ENCODE measurements at regions of chr11 and their contacts with region 1.

Region 1: DNA sequence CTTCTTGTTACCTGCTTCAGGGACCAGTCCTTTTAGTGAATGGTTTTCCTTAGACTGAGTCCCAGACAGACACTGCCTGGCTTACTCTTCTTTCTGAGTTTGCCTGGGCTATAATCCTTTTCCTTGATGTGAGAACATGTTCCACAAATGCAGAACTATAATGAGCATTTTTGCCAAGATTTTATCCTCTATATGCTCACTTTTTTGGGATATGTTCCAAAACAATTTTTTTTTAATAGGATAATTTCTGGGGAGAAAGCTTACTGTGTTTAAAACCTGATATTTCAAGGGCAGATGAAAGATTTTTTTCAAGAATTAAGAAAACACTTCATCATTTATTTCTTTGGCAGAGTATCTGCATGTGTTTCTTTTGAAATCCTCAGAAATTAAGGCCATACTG is 110.0 kb upstream of the TENM4 start:
- DNase-seq: no peak
- H3K4me3 ChIP-seq: no peak overlapping the region
- H3K4me3 Mint-ChIP-seq: no peak overlapping the region
- H3K27ac ChIP-seq: no peak overlapping the region
- H3K27ac Mint-ChIP-seq: no peak overlapping the region
- H3K4me1 ChIP-seq: no peaks in the 10 kb centered on the region
- H3K4me1 Mint-ChIP-seq: no peaks in the 10 kb centered on the region
- H3K27me3 ChIP-seq: no peaks in the 10 kb centered on the region
- H3K27me3 Mint-ChIP-seq: no peaks in the 10 kb centered on the region
- CTCF ChIP-seq: no peak

Region 2: DNA sequence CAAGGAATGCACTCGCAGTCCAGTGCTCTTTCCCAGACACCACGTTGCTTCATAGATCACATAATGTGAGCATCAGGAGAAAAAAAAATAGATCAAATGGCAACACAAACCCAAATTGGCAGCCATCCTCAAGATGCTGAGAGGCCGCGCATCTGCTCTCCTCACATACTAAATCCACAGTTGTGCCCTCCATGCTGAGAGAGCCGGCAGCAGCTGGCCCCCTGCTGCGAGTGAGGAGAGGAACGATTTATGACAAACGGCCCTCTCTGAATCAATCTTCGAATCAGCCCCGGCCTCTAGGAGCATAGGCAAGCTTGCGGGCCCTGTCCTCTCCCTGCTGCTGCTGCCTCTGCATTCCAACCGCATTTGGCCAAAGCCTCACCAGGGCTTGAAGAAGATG is 49.9 kb after region 1 on chr11:
- intact Hi-C with region 1: loop called in 1 of 2 experiments (anchors 2 kb)
- DNase-seq: no peak
- H3K4me3 ChIP-seq: no peak overlapping the region
- H3K4me3 Mint-ChIP-seq: no peak overlapping the region
- H3K27ac ChIP-seq: no peak overlapping the region
- H3K27ac Mint-ChIP-seq: no peak overlapping the region
- H3K4me1 ChIP-seq: no peaks in the 10 kb centered on the region
- H3K4me1 Mint-ChIP-seq: no peaks in the 10 kb centered on the region
- H3K27me3 ChIP-seq: no peaks in the 10 kb centered on the region
- H3K27me3 Mint-ChIP-seq: peaks cover 0 to 2% (median 0%) of the 10 kb centered on the region in 3 donors
- CTCF ChIP-seq: no peak

Measured in CD14-positive monocyte (primary cell).